Activated naive CD4-positive, alpha-beta T cell treated with anti-CD3 and anti-CD28 coated beads for 36 hours (primary cell): ENCODE measurements at regions of chr16 and their contacts with region 1.

Region 1: DNA sequence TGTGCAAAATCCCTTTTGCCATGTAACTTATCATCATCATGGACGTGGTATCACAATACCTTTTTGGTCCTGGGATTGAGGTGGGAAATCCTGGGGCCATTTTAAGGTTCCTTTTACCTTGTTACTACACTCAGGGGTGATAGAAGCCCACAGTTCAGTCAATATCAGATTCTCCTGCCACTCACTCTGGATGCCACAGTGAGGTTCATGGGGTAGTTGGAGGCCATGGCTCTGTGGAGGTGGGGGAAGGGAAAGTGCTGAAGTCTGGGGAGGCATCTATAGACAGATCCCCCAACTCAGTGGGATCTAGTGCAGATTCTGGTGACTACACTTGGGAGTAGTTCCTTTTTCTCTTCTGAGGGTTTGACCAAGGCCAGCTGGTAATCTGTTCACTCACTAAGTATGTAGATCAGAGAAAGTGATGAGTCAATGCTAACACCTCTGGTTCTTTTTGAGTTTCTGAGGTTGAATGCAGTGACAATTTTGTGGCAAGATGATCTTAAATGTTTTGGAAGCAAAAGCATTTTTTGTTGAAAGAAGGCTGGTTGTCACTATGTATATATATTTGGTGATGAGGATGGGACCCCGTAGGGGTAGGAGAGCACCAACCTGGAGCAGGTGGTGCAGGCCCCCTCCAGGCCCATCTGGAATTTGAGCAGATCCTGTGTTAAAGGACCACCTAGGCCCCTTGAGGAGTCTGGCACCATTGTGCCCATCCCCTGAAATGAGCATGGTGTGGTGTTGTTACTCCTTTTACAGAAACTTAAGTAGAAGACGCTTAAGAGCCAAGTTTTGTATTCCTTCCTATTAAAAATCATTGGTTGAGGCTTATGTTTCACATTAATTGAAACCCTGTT is 18.8 kb upstream of the IRF8 start:
- DNase-seq: peak; percentile 56
- H3K4me3 Mint-ChIP-seq: no peak overlapping the region
- H3K27ac Mint-ChIP-seq: peak overlapping the region; percentile 57
- H3K4me1 Mint-ChIP-seq: peaks cover 44% of the 10 kb centered on the region
- H3K27me3 Mint-ChIP-seq: peaks cover 17% of the 10 kb centered on the region

Region 2: DNA sequence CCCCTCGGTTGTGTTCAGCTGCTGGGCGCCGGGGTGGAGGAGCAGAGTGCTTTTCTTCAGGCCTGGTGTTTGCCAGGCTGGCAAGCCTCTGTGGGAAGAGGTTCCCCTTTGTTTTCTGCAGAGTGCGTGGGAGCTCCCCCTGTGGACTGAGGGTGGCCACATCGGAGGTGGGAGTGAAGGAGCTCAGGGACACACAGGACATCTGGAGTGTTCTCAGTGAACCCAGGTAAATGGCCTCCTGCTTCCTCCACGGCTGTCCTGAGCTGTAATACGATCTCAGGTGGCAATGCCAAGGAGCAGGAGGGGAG is 20.4 kb before region 1 on chr16:
- CTCF ChIA-PET with region 1: no interaction called
- intact Hi-C with region 1: no loop called
- DNase-seq: no peak
- H3K4me3 Mint-ChIP-seq: no peak overlapping the region
- H3K27ac Mint-ChIP-seq: no peak overlapping the region
- H3K4me1 Mint-ChIP-seq: peaks cover 10% of the 10 kb centered on the region
- H3K27me3 Mint-ChIP-seq: peaks cover 2% of the 10 kb centered on the region

Region 3: DNA sequence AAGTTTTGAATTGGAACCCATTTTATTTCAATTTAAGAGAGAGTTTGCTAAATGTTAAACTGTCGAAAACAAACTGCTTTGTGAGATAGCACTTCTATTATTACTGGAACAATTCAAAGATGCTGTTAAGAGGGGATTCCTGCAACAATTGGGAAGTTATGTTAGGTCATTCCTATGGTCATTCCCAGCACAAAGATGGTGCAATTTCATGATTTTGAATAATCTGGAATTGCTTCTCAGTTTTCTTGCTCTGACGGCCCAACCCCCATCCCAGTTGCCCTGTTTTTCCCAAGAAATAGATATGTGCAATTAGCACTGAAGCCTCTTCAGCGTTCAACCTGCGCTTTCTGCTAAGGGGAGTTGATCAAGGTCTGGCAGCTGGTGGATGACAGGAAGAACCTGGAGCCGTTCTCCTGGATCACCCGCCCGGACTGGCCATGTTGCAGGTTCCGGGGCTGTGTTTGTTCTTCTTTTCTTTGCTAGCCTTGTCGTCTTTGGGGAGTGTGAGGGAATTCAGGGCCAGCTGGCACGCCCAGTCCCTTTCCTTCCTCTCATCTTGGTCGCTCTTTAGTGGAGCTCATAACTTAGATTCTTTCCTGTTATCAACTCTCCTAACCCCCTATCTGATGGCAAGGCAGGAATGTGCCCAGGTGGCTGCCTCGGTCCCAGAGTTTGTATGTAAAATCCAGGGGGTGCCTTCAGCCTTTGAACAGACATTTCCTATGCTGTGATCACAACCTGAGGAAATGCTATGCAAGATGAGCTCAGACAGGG is 10.2 kb before region 1 on chr16:
- CTCF ChIA-PET with region 1: no interaction called
- intact Hi-C with region 1: loop called (anchors 1 kb)
- DNase-seq: no peak
- H3K4me3 Mint-ChIP-seq: no peak overlapping the region
- H3K27ac Mint-ChIP-seq: peak overlapping the region; percentile 55
- H3K4me1 Mint-ChIP-seq: peaks cover 34% of the 10 kb centered on the region
- H3K27me3 Mint-ChIP-seq: no peaks in the 10 kb centered on the region

Region 4: GRCh38 chr16:85935974-85936760 is 56.0 kb after region 1 on chr16:
- CTCF ChIA-PET with region 1: no interaction called
- intact Hi-C with region 1: loop called (anchors 2 kb)
- DNase-seq: peak; percentile 90
- H3K4me3 Mint-ChIP-seq: peak overlapping the region; percentile 55
- H3K27ac Mint-ChIP-seq: peak overlapping the region; percentile 96
- H3K4me1 Mint-ChIP-seq: peaks cover 62% of the 10 kb centered on the region
- H3K27me3 Mint-ChIP-seq: no peaks in the 10 kb centered on the region